ENCODE measurements at regions of chr5 and their contacts with region 1.

Region 1: DNA sequence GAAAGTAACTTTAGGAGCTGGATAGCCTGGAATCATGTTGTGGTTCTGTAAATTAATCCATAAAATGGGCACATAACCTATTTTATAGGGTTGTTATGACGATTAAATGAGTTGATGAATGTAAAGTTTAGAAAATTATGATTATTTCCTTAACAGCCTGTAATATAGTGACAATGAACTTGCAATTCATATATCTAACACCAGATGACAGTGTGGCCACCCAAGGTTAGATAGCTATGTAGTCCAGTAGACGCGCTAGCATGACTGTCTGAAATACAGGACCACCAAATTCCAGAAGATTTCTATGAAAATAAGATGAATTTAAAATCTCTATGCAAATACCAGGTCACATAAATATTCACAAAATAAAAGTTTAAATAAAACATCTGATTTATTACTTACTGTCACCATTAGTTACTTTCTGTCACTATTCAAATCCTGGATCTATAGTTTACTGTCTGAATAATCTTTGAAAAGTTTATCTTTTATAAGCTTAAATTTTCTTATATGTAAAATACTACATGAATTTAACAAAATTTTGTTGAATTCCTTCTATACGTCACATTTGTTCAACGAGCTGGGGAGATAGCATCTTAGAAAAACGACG is 26.1 kb upstream of the MACIR start:
- DNase-seq: peak; percentile 41
- ATAC-seq: peak; percentile 89
- H3K4me3 ChIP-seq: no peak overlapping the region
- H3K27ac ChIP-seq: no peak overlapping the region
- H3K4me1 ChIP-seq: no peaks in the 10 kb centered on the region
- H3K27me3 ChIP-seq: 0 out of 5 replicates have a peak, but pooled peaks cover 0 to 3% of the 10 kb centered on the region in 2 experiments
- CTCF ChIP-seq: peak; percentile 71
- EP300 ChIP-seq: no peak
- POLR2A ChIP-seq: no peak
- RAD21 ChIP-seq: 0 out of 2 replicates have a peak, but pooled peaks have one; percentile 38

Region 2: GRCh38 chr5:103295871-103296270 is 63.4 kb after region 1 on chr5:
- CTCF ChIA-PET with region 1: no interaction called
- POLR2A ChIA-PET with region 1: no interaction called
- in situ Hi-C with region 1: no loop called
- intact Hi-C with region 1: loop called (anchors 1 kb)
- DNase-seq: no peak
- ATAC-seq: peak; percentile 59
- H3K4me3 ChIP-seq: no peak overlapping the region
- H3K27ac ChIP-seq: no peak overlapping the region
- H3K4me1 ChIP-seq: no peaks in the 10 kb centered on the region
- H3K27me3 ChIP-seq: 0 out of 5 replicates have a peak, but pooled peaks cover 0 to 4% of the 10 kb centered on the region in 2 experiments
- CTCF ChIP-seq: 0 out of 2 replicates have a peak, but pooled peaks have one; percentile 23
- EP300 ChIP-seq: no peak
- POLR2A ChIP-seq: no peak
- RAD21 ChIP-seq: no peak

Region 3: GRCh38 chr5:103475629-103476240 is 243.2 kb after region 1 on chr5:
- CTCF ChIA-PET with region 1: interaction called, 56 read pairs
- POLR2A ChIA-PET with region 1: no interaction called
- in situ Hi-C with region 1: loop called (anchors 5 kb)
- intact Hi-C with region 1: loop called (anchors 1 kb)
- DNase-seq: peak; percentile 21
- ATAC-seq: peak; percentile 57
- H3K4me3 ChIP-seq: no peak overlapping the region
- H3K27ac ChIP-seq: no peak overlapping the region
- H3K4me1 ChIP-seq: no peaks in the 10 kb centered on the region
- H3K27me3 ChIP-seq: no peaks in the 10 kb centered on the region
- CTCF ChIP-seq: peak; percentile 68
- EP300 ChIP-seq: no peak
- POLR2A ChIP-seq: no peak
- RAD21 ChIP-seq: no peak; the same call in 1 of the 2 replicates

Measured in HepG2 (cell line).